GM18951 (cell line): ENCODE measurements at regions of chr2 and their contacts with region 1.

Region 1: GRCh38 chr2:158905784-158906183 is 62.7 kb upstream of the TANC1 start:
- POLR2A ChIP-seq: no peak

Region 2: GRCh38 chr2:158325031-158325781 is 580.6 kb before region 1 on chr2:
- in situ Hi-C with region 1: no loop called
- POLR2A ChIP-seq: no peak

Region 3: GRCh38 chr2:159124441-159124911 is 218.7 kb after region 1 on chr2:
- in situ Hi-C with region 1: loop called (anchors 5 kb)
- POLR2A ChIP-seq: no peak